ENCODE measurements at regions of chr18 and their contacts with region 1.

Region 1: GRCh38 chr18:72762515-72763122 is 105.2 kb downstream of the NETO1 start:
- DNase-seq: peak; percentile 34 to 73 (median 66)
- H3K4me3 ChIP-seq: no peak overlapping the region
- H3K27ac ChIP-seq: no peak overlapping the region
- H3K4me1 ChIP-seq: no peaks in the 10 kb centered on the region
- H3K27me3 ChIP-seq: peaks cover 0 to 2% (median 0%) of the 10 kb centered on the region in 5 experiments

Region 2: DNA sequence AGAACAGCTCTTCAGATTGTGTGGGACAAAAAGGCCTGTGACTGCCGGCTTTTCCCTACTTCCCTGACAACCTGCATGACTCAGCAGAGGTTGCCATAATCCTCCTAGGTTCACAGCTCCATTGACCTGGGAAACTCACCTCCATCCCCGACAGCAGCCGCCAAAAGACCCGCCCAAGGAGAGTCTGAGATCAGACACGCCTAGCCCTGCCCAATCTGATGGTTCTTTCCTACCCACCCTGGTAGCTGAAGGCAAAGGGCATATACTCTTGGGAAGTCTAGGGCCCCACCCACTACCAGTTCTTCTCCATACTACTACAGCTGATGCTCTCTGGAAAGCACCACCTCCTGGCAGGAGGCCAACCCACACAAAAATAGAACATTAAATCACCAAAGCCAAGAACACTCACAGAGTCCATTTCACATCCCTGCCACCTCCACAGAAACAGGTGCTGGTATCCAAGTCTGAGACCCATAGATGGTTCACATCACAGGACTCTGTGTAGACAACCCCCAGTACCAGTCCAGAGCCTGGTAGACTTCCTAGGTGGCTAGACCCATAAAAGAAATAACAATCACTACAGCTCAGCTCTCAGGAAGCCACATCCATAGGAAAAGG is 35.5 kb before region 1 on chr18:
- CTCF ChIA-PET with region 1: no interaction called
- POLR2A ChIA-PET with region 1: no interaction called
- DNase-seq: no peak
- H3K4me3 ChIP-seq: no peak overlapping the region
- H3K27ac ChIP-seq: no peak overlapping the region
- H3K4me1 ChIP-seq: no peaks in the 10 kb centered on the region
- H3K27me3 ChIP-seq: no peaks in the 10 kb centered on the region

Region 3: GRCh38 chr18:72752220-72752619 is 10.4 kb before region 1 on chr18:
- CTCF ChIA-PET with region 1: interaction called, 11 read pairs
- POLR2A ChIA-PET with region 1: no interaction called
- DNase-seq: no peak
- H3K4me3 ChIP-seq: no peak overlapping the region
- H3K27ac ChIP-seq: no peak overlapping the region
- H3K4me1 ChIP-seq: no peaks in the 10 kb centered on the region
- H3K27me3 ChIP-seq: peaks cover 0 to 10% (median 3%) of the 10 kb centered on the region in 5 experiments

Region 4: GRCh38 chr18:72908181-72908580 is 145.6 kb after region 1 on chr18:
- CTCF ChIA-PET with region 1: no interaction called
- POLR2A ChIA-PET with region 1: no interaction called
- DNase-seq: no peak
- H3K4me3 ChIP-seq: no peak overlapping the region
- H3K27ac ChIP-seq: no peak overlapping the region
- H3K4me1 ChIP-seq: no peaks in the 10 kb centered on the region
- H3K27me3 ChIP-seq: peaks cover 0 to 2% (median 0%) of the 10 kb centered on the region in 5 experiments

Measured in common myeloid progenitor, CD34-positive (primary cell).